PC-3 (cell line): ENCODE measurements at regions of chr11 and their contacts with region 1.

Region 1: GRCh38 chr11:71075116-71075720 is 177.2 kb downstream of the SHANK2 start:
- DNase-seq: no peak
- ATAC-seq: no peak
- H3K4me3 ChIP-seq: no peak overlapping the region
- H3K27ac ChIP-seq: no peak overlapping the region
- H3K4me1 ChIP-seq: peaks cover 6% of the 10 kb centered on the region; the same call in 1 of the 2 replicates
- H3K27me3 ChIP-seq: no peaks in the 10 kb centered on the region
- CTCF ChIP-seq: no peak

Region 2: GRCh38 chr11:70595452-70595851 is 479.8 kb before region 1 on chr11:
- CTCF ChIA-PET with region 1: no interaction called
- POLR2A ChIA-PET with region 1: no interaction called
- intact Hi-C with region 1: no loop called
- DNase-seq: no peak
- ATAC-seq: no peak
- H3K4me3 ChIP-seq: no peak overlapping the region
- H3K27ac ChIP-seq: no peak overlapping the region
- H3K4me1 ChIP-seq: no peaks in the 10 kb centered on the region
- H3K27me3 ChIP-seq: no peaks in the 10 kb centered on the region
- CTCF ChIP-seq: no peak

Region 3: DNA sequence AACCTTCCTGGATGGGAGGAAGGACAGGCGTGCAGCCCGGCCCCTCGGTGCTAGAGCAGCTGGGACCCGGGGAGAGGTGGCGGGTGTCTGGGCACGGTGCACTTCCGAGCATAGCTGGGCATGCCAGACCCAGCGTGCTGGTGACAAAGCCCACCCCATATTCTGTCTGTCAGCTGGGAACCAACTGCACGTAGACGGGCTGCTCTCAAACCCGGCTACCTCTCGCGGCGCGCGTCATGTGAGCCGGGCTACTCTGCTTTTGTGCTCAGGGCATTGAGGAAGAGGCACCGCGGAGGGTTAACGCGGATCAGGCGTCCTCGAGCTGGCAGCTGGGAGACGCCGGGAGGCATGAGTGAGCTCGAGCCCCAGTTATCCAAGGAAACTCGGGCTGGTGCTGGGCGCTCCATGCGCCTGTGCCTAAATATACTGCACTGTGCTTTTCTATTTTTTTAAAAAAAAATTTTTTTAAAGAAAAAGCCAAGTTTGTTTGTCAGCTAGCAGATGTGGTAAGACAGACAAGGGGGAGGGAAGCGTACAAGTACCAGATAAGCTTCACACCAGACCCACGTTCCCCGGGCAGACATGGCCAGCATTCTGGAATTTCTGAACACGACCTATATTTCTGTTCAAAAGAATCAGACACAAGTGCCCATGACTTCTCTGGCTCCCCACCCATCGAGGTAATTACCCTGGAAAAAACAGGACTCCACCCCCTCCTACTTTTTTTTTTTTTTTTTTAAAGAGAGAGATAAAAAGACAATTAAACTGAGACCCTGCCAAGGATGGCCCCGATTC is 248.5 kb before region 1 on chr11:
- CTCF ChIA-PET with region 1: no interaction called
- POLR2A ChIA-PET with region 1: interaction called, 12 read pairs
- intact Hi-C with region 1: no loop called
- DNase-seq: no peak
- ATAC-seq: no peak
- H3K4me3 ChIP-seq: no peak overlapping the region
- H3K27ac ChIP-seq: no peak overlapping the region
- H3K4me1 ChIP-seq: no peaks in the 10 kb centered on the region
- H3K27me3 ChIP-seq: no peaks in the 10 kb centered on the region
- CTCF ChIP-seq: no peak